GM12878 (cell line): ENCODE measurements at regions of chr12 and their contacts with region 1.

Region 1: GRCh38 chr12:50222275-50222795 is 55.2 kb upstream of the CERS5 start:
- DNase-seq: no peak
- ATAC-seq: peak; percentile 41
- H3K4me3 ChIP-seq: peak overlapping the region; percentile 86
- H3K27ac ChIP-seq: peak overlapping the region; percentile 84
- H3K4me1 ChIP-seq: peaks cover 9% of the 10 kb centered on the region
- H3K27me3 ChIP-seq: no peaks in the 10 kb centered on the region
- CTCF ChIP-seq: no peak
- EP300 ChIP-seq: no peak
- POLR2A ChIP-seq: peak; percentile 56
- RAD21 ChIP-seq: 0 out of 2 replicates have a peak, but pooled peaks have one; percentile 12

Region 2: DNA sequence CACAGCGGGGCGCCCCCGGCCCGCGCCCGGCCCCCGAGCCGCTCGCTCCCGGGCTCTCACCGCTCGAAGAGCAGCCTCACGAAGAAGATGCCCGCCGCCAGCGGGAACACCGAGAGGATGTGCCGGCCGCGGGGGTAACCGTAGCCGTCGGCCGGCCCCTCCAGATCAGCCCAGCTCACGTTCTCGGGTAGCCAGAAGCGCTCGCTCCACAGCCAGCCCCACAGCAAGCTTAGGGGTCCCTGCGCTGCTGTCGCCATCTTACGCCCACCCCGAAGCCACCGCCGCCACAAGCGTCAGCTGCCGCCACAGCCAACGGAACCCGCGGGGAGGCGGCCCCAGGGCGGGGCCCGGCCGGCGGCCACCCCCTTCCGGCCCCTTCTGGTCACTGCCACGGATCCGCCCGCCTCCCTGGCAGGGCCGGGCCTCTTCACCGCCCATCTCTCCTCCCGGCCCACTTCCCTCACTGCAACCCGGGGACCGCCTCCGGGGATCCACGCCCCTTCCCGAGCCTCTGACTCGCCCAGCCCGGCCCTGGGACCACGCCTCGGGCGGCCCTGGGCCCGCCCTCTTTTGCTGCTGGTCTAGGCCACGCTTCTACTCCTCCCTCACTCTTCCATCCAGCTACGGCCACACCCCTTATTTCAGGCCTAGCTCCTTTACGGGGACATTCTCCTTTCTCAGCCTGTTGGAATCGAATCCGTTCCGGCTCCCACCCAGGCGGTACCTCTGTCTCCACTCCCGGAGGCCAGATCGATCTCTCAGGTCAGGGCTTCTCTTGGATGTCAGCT is 55.1 kb before region 1 on chr12 and contains the start of gene CERS5:
- CTCF ChIA-PET with region 1: interaction called, 4 read pairs
- POLR2A ChIA-PET with region 1: interaction called, 10 read pairs
- RAD21 ChIA-PET with region 1: interaction called, 4 read pairs
- SMC1A ChIA-PET with region 1: interaction called, 11 read pairs
- in situ Hi-C with region 1: no loop called
- intact Hi-C with region 1: no loop called
- DNase-seq: peak; percentile 85
- ATAC-seq: peak; percentile 99
- H3K4me3 ChIP-seq: peak within 1 kb of the TSS; percentile 80
- H3K27ac ChIP-seq: peak within 1 kb of the TSS; percentile 71
- H3K4me1 ChIP-seq: no peaks in the 10 kb centered on the region
- H3K27me3 ChIP-seq: no peaks in the 10 kb centered on the region
- CTCF ChIP-seq: no peak
- EP300 ChIP-seq: peak in 1 of 2 experiments; percentile 22; a peak in 1 of 4 replicates
- POLR2A ChIP-seq: peak; percentile 87
- RAD21 ChIP-seq: no peak
- polyA plus RNA-seq, gene CERS5: 6.8 to 12.2 TPM

Region 3: GRCh38 chr12:50187084-50187900 is 35.0 kb before region 1 on chr12:
- CTCF ChIA-PET with region 1: interaction called, 3 read pairs
- POLR2A ChIA-PET with region 1: interaction called, 3 read pairs
- RAD21 ChIA-PET with region 1: interaction called, 29 read pairs
- SMC1A ChIA-PET with region 1: interaction called, 32 read pairs
- in situ Hi-C with region 1: no loop called
- intact Hi-C with region 1: no loop called
- DNase-seq: peak; percentile 47
- ATAC-seq: peak; percentile 91
- H3K4me3 ChIP-seq: no peak overlapping the region
- H3K27ac ChIP-seq: peak overlapping the region; percentile 64
- H3K4me1 ChIP-seq: peaks cover 28% of the 10 kb centered on the region
- H3K27me3 ChIP-seq: no peaks in the 10 kb centered on the region
- CTCF ChIP-seq: no peak
- EP300 ChIP-seq: peak; percentile 94 to 96; a peak in 3 of 4 replicates
- POLR2A ChIP-seq: no peak
- RAD21 ChIP-seq: 0 out of 2 replicates have a peak, but pooled peaks have one; percentile 6

Region 4: GRCh38 chr12:50234347-50234746 is 12.0 kb after region 1 on chr12:
- CTCF ChIA-PET with region 1: interaction called, 7 read pairs
- POLR2A ChIA-PET with region 1: interaction called, 24 read pairs
- RAD21 ChIA-PET with region 1: interaction called, 28 read pairs
- SMC1A ChIA-PET with region 1: interaction called, 10 read pairs
- in situ Hi-C with region 1: no loop called
- intact Hi-C with region 1: no loop called
- DNase-seq: no peak
- ATAC-seq: peak; percentile 76
- H3K4me3 ChIP-seq: no peak overlapping the region
- H3K27ac ChIP-seq: no peak overlapping the region
- H3K4me1 ChIP-seq: no peaks in the 10 kb centered on the region
- H3K27me3 ChIP-seq: no peaks in the 10 kb centered on the region
- CTCF ChIP-seq: no peak
- EP300 ChIP-seq: no peak
- POLR2A ChIP-seq: no peak
- RAD21 ChIP-seq: no peak

Region 5: GRCh38 chr12:50257686-50258551 is 35.6 kb after region 1 on chr12:
- CTCF ChIA-PET with region 1: interaction called, 6 read pairs
- POLR2A ChIA-PET with region 1: interaction called, 53 read pairs
- RAD21 ChIA-PET with region 1: interaction called, 58 read pairs
- SMC1A ChIA-PET with region 1: interaction called, 61 read pairs
- in situ Hi-C with region 1: no loop called
- intact Hi-C with region 1: loop called (anchors 2 kb)
- DNase-seq: no peak
- ATAC-seq: no peak
- H3K4me3 ChIP-seq: no peak overlapping the region
- H3K27ac ChIP-seq: no peak overlapping the region
- H3K4me1 ChIP-seq: peaks cover 20% of the 10 kb centered on the region
- H3K27me3 ChIP-seq: no peaks in the 10 kb centered on the region
- CTCF ChIP-seq: no peak
- EP300 ChIP-seq: no peak
- POLR2A ChIP-seq: no peak
- RAD21 ChIP-seq: no peak

Region 6: GRCh38 chr12:50314629-50315312 is 92.4 kb after region 1 on chr12:
- CTCF ChIA-PET with region 1: interaction called, 11 read pairs
- POLR2A ChIA-PET with region 1: no interaction called
- RAD21 ChIA-PET with region 1: interaction called, 12 read pairs
- SMC1A ChIA-PET with region 1: interaction called, 22 read pairs
- in situ Hi-C with region 1: no loop called
- intact Hi-C with region 1: loop called (anchors 5 kb)
- DNase-seq: no peak
- ATAC-seq: peak; percentile 62
- H3K4me3 ChIP-seq: no peak overlapping the region
- H3K27ac ChIP-seq: no peak overlapping the region
- H3K4me1 ChIP-seq: no peaks in the 10 kb centered on the region
- H3K27me3 ChIP-seq: no peaks in the 10 kb centered on the region
- CTCF ChIP-seq: peak; percentile 44 to 63 (median 51); a peak in 5 of 6 replicates
- EP300 ChIP-seq: no peak
- POLR2A ChIP-seq: no peak
- RAD21 ChIP-seq: peak; percentile 83

Region 7: GRCh38 chr12:50333441-50333840 is 111.1 kb after region 1 on chr12:
- CTCF ChIA-PET with region 1: no interaction called
- POLR2A ChIA-PET with region 1: no interaction called
- RAD21 ChIA-PET with region 1: no interaction called
- SMC1A ChIA-PET with region 1: no interaction called
- in situ Hi-C with region 1: no loop called
- intact Hi-C with region 1: no loop called
- DNase-seq: no peak
- ATAC-seq: no peak
- H3K4me3 ChIP-seq: no peak overlapping the region
- H3K27ac ChIP-seq: no peak overlapping the region
- H3K4me1 ChIP-seq: no peaks in the 10 kb centered on the region
- H3K27me3 ChIP-seq: no peaks in the 10 kb centered on the region
- CTCF ChIP-seq: no peak
- EP300 ChIP-seq: no peak
- POLR2A ChIP-seq: no peak
- RAD21 ChIP-seq: no peak